Posterior vena cava (tissue), 2 donors: ENCODE measurements at regions of chr17 and their contacts with region 1.

Region 1: GRCh38 chr17:73899839-73900238 is 255.6 kb upstream of the SDK2 start:
- DNase-seq: no peak

Region 2: GRCh38 chr17:73879987-73880386 is 19.9 kb before region 1 on chr17:
- intact Hi-C with region 1: loop called in 1 of 2 experiments (anchors 2 kb)
- DNase-seq: no peak